A549 (cell line): ENCODE measurements at regions of chr2 and their contacts with region 1.

Region 1: DNA sequence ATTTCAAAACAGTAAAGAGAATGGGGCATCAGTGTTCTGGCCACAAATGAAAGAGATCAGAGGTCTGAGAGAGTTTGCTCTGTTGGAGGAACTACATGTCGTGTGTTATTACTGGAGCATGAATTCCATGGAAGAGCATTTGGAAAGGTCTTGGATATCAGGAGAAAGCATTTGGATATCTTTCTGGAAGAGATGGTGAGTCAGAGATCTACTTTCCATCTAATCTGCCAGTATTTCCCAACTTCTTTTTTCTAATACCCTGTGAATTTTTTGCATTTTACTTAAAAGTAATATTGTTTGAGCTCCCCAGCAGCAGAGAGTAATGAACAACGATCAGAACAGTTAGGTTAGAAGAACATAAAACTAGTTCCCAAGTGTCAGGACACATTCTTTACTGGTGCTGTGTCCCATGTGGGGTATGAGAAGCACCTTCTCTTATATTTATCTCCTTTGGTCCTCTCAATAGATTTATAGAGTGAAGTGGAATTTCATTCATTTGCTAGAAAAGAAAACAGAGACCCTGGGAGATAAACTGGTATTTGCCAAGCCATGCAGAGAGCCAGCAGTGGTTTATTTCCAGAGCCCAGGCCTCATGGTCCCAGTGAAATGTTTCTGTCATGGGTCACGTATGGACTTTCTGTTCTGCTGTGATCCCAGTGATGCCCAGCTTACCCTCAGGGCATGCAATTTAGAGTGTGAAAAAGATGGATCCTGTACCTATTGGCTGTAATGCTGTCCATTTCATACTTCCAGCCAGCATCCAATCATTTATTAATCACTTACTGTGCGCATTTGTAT is 130.8 kb upstream of the NT5C1B start:
- DNase-seq: peak; percentile 7 to 29
- ATAC-seq: peak; percentile 62 to 64; a peak in 5 of 6 replicates
- H3K4me3 ChIP-seq: no peak overlapping the region
- H3K27ac ChIP-seq: no peak overlapping the region; a peak in 1 of 6 replicates
- H3K4me1 ChIP-seq: peaks cover 12% of the 10 kb centered on the region; the same call in 2 of the 3 replicates
- CTCF ChIP-seq: no peak
- EP300 ChIP-seq: no peak
- POLR2A ChIP-seq: no peak
- RAD21 ChIP-seq: no peak

Region 2: DNA sequence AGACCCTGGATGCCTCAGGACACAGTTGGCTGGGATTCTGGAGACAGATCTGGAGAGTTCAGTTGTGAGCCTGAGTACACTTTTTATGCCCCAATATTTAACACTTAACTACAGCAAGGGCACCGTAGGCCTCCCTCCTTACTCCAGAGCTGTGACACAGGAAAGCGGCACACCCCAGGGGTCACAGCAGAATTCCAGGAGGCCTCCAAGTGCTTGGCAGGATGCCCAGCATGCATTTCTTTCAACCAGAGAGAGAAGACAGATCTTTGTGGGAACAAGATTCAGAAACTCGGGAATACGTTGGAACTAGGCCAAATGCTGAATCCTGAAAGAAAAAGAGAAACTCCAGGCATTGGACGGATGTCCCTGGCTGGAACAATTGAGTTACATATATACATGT is 68.4 kb after region 1 on chr2:
- CTCF ChIA-PET with region 1: no interaction called
- POLR2A ChIA-PET with region 1: no interaction called
- DNase-seq: no peak
- ATAC-seq: no peak
- H3K4me3 ChIP-seq: no peak overlapping the region
- H3K27ac ChIP-seq: no peak overlapping the region
- H3K4me1 ChIP-seq: no peaks in the 10 kb centered on the region
- CTCF ChIP-seq: no peak
- EP300 ChIP-seq: no peak
- POLR2A ChIP-seq: no peak
- RAD21 ChIP-seq: no peak

Region 3: GRCh38 chr2:18814387-18814786 is 94.2 kb after region 1 on chr2:
- CTCF ChIA-PET with region 1: no interaction called
- POLR2A ChIA-PET with region 1: no interaction called
- DNase-seq: no peak
- ATAC-seq: no peak
- H3K4me3 ChIP-seq: no peak overlapping the region
- H3K27ac ChIP-seq: no peak overlapping the region
- H3K4me1 ChIP-seq: no peaks in the 10 kb centered on the region
- CTCF ChIP-seq: no peak
- EP300 ChIP-seq: no peak
- POLR2A ChIP-seq: no peak
- RAD21 ChIP-seq: no peak

Region 4: GRCh38 chr2:19035238-19035637 is 315.1 kb after region 1 on chr2:
- CTCF ChIA-PET with region 1: no interaction called
- POLR2A ChIA-PET with region 1: interaction called, 10 read pairs
- DNase-seq: no peak
- ATAC-seq: no peak
- H3K4me3 ChIP-seq: no peak overlapping the region
- H3K27ac ChIP-seq: no peak overlapping the region
- H3K4me1 ChIP-seq: no peaks in the 10 kb centered on the region
- CTCF ChIP-seq: no peak
- EP300 ChIP-seq: no peak
- POLR2A ChIP-seq: no peak
- RAD21 ChIP-seq: no peak